MCF 10A (cell line): ENCODE measurements at regions of chr7 and their contacts with region 1.

Region 1: DNA sequence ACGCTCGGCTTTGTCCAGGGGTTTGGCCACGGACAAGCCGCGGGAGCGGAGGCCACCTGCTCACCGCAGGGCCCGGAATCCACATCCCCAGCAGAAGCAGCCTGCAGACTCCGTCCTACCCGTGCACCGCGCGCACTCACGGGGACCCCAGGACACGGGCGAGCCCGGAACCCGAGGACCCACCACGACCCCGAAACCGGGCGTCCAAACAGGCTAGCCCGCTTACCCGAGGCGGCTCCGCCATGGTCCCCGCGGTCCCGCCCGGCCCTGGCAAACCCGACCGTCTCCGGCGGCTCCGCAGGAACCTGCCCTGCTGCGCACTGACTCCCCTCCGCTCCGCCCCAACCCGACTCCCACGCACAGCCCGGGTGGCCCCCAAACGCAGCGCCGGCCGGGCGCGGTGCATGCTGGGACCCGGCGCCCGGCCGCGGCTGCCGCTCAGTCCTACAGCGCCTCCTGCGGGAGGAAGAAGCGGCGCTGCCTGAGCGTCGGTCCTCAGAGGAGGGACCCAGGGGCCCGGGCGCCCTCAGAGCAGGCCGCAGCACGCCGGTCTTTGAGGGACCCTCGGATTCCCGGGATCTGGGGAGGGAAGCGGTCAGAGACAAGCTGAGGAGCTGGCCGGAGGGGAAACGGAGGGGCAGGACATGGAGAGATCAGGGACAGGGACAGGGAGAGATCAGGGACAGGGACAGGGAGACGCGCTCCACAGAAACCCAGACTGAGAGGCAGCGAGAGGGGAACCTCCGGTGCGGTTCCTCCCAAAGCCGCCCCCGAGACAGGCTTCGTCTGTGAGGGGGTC is at the start of gene ZNF786:
- DNase-seq: peak; percentile 90
- H3K4me3 Mint-ChIP-seq: peak within 1 kb of the TSS; percentile 98
- H3K27ac Mint-ChIP-seq: peak within 1 kb of the TSS; percentile 99
- H3K4me1 Mint-ChIP-seq: peaks cover 6% of the 10 kb centered on the region
- H3K27me3 Mint-ChIP-seq: no peaks in the 10 kb centered on the region
- CTCF ChIP-seq: peak; percentile 87
- total RNA-seq, gene ZNF786: 5.6 and 6.7 TPM in 2 replicates

Region 2: GRCh38 chr7:148987010-148987750 is 103.4 kb before region 1 on chr7:
- CTCF ChIA-PET with region 1: interaction called, 4 read pairs
- POLR2A ChIA-PET with region 1: interaction called, 6 read pairs
- intact Hi-C with region 1: loop called (anchors 5 kb)
- DNase-seq: peak; percentile 89
- H3K4me3 Mint-ChIP-seq: peak overlapping the region; percentile 92
- H3K27ac Mint-ChIP-seq: peak overlapping the region; percentile 80
- H3K4me1 Mint-ChIP-seq: peaks cover 29% of the 10 kb centered on the region
- H3K27me3 Mint-ChIP-seq: no peaks in the 10 kb centered on the region
- CTCF ChIP-seq: no peak

Region 3: GRCh38 chr7:149005241-149006050 is 85.2 kb before region 1 on chr7:
- CTCF ChIA-PET with region 1: interaction called, 5 read pairs
- POLR2A ChIA-PET with region 1: interaction called, 3 read pairs
- intact Hi-C with region 1: loop called (anchors 1 kb)
- DNase-seq: peak; percentile 65
- H3K4me3 Mint-ChIP-seq: no peak overlapping the region
- H3K27ac Mint-ChIP-seq: no peak overlapping the region
- H3K4me1 Mint-ChIP-seq: no peaks in the 10 kb centered on the region
- H3K27me3 Mint-ChIP-seq: no peaks in the 10 kb centered on the region
- CTCF ChIP-seq: peak; percentile 53

Region 4: GRCh38 chr7:149071641-149072437 is 18.8 kb before region 1 on chr7:
- CTCF ChIA-PET with region 1: interaction called, 14 read pairs
- POLR2A ChIA-PET with region 1: interaction called, 3 read pairs
- intact Hi-C with region 1: no loop called
- DNase-seq: no peak
- H3K4me3 Mint-ChIP-seq: no peak overlapping the region
- H3K27ac Mint-ChIP-seq: no peak overlapping the region
- H3K4me1 Mint-ChIP-seq: peaks cover 6% of the 10 kb centered on the region
- H3K27me3 Mint-ChIP-seq: no peaks in the 10 kb centered on the region
- CTCF ChIP-seq: no peak

Region 5: DNA sequence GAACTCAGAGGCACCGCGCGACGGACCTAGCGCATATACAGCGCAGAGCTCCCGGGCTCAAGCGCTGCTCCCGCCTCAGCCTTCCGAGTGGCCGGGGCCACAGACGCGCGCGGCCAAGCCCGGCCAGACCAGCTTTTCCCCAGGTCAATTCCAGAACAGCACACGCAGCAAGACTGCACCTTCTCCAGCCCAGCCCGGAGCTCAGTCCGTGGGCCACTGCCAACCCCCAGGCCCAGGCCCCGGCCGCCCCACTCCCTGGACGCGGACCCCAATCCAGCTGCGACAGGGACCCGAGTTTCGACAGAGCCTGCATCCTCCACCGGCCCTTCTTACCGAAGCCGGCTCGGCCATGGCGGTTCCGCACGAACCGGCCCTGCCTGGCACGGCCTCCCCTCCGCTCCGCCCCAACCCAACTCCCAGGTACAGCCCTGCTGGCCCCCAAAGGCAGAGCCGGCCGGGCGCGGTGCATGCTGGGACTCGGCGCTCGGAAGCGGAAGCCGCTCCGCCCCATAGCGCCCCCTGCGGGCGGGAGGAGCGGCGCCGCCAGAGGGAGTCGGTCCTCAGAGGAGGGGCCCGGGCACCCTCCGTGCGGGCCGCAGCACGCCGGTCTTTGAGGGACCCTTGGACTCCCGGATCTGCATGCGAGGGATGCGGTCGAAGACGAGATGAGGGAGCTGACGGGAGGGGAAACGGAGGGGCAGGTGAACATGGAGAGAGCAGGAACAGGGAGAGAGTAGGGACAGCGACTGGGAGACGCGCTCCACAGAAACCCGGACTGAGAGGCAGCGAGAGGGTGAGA is 35.5 kb after region 1 on chr7 and contains the start of gene ZNF425:
- CTCF ChIA-PET with region 1: interaction called, 4 read pairs
- POLR2A ChIA-PET with region 1: interaction called, 6 read pairs
- intact Hi-C with region 1: loop called (anchors 2 kb)
- DNase-seq: peak; percentile 93
- H3K4me3 Mint-ChIP-seq: peak within 1 kb of the TSS; percentile 97
- H3K27ac Mint-ChIP-seq: peak within 1 kb of the TSS; percentile 99
- H3K4me1 Mint-ChIP-seq: peaks cover 18% of the 10 kb centered on the region
- H3K27me3 Mint-ChIP-seq: no peaks in the 10 kb centered on the region
- CTCF ChIP-seq: peak; percentile 89
- total RNA-seq, gene ZNF425: 2.6 and 3.3 TPM in 2 replicates